Tibial artery (tissue), 4 donors: ENCODE measurements at regions of chr15 and their contacts with region 1.

Region 1: GRCh38 chr15:34773917-34774316 is 19.1 kb upstream of the GJD2 start:
- DNase-seq: no peak
- H3K4me3 ChIP-seq: no peak overlapping the region
- H3K27ac ChIP-seq: no peak overlapping the region
- H3K4me1 ChIP-seq: no peaks in the 10 kb centered on the region
- H3K27me3 ChIP-seq: no peaks in the 10 kb centered on the region
- CTCF ChIP-seq: no peak

Region 2: GRCh38 chr15:34358367-34358766 is 415.6 kb before region 1 on chr15:
- intact Hi-C with region 1: loop called (anchors 5 kb)
- DNase-seq: no peak
- H3K4me3 ChIP-seq: no peak overlapping the region
- H3K27ac ChIP-seq: no peak overlapping the region
- H3K4me1 ChIP-seq: no peaks in the 10 kb centered on the region
- H3K27me3 ChIP-seq: no peaks in the 10 kb centered on the region
- CTCF ChIP-seq: no peak